ENCODE measurements at regions of chr3 and their contacts with region 1.

Region 1: DNA sequence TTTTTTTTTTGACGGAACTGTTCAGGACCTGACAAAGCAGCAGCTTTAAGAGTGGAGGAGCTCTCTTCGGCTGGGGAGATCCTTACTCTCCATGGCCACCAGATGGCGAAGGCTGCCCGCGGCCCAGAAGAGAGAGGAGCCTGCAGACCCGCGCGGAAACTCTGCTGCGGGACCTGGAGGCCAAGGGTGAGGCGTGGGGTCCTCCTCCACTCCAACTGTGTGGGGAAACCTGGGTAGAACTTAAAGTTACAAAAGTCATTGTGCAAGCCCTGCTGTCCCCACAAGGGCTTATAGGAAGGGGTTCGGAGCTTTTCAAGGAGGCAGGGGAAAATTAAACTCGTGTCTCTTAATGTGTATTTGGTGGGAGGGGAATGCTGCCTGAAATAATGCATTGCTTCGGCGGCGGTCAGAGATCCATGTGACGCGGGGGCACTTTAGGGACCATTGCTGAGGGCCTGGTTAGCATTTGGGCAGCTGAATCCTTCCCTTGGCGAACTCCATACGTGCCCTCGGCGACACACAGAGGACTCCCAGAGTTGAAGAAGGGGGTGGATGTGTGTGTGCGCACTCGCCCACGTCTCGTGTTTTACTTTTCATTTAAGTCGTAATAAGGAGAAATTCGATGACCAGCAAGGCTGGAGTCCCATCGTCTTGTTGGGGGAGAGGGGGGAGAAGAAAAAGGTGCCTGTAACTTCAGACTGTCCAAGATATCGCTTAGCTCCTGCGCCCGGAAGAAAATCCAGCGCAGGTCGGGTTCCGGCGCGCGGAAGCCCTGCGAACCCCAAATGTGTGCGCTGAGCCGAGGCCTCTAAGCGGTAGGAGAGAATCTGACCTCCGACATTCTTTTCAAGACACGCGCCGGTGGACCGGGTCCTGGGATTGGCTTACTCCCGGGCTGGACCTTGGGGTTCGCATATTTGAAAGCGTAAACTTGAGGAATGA is 9.7 kb downstream of the EOMES start:
- DNase-seq: peak; percentile 77 to 80 (median 78)
- H3K4me3 ChIP-seq: peak overlapping the region; percentile 71 to 83
- H3K4me3 Mint-ChIP-seq: peak overlapping the region; percentile 92 to 99 (median 97)
- H3K27ac ChIP-seq: peak overlapping the region; percentile 4
- H3K27ac Mint-ChIP-seq: peak overlapping the region in 6 of 7 donors; percentile 64 to 94 (median 88)
- H3K4me1 ChIP-seq: peaks cover 25% of the 10 kb centered on the region
- H3K4me1 Mint-ChIP-seq: peaks cover 13 to 42% (median 24%) of the 10 kb centered on the region in 4 donors
- H3K27me3 ChIP-seq: peaks cover 18% of the 10 kb centered on the region
- H3K27me3 Mint-ChIP-seq: peaks cover 20 to 25% of the 10 kb centered on the region in 2 donors

Region 2: DNA sequence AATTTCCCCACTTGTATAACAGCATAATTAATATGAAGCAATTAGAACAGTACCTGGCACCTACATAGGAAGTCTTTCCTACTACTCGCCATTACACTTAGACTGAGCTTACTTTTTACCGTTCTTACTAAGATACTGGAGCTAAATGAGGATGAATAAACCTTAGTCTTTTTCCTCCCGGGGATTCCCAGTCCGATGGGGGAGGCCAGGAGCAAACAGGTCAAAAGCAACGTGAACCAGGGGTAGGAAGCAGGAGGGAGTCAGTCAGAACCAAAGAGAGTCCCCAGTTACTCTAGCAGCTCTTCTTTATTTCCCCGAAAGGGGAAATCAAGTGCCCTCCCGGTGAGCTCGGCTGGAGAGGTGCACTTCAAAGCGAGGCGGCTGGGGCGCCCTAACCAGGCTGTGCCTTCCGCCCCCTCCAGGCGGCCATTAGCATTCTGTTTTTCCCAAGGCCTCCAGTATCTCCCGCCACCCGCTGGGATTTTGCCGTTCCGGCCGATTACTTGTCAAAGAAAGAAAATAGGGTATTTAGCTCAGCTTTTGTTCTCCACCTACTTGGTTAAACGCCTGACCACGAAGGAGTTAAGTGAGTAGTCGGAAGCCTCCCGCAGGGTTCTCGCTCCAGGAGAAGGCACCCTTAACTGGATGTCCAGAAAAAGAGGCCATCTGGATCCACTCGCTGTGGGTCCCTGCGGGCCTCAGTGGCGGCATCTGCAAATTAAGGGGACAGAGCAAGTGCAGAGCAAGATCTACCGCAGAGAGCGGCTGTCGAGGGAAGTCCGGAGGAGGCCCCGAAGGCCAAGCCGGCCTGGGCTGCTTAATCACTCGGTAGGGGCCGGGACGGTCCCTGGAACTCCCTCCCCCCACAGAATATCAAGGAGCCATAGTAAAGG is 16.0 kb after region 1 on chr3:
- CTCF ChIA-PET with region 1: interaction called, 86 read pairs
- POLR2A ChIA-PET with region 1: interaction called, 45 read pairs
- intact Hi-C with region 1: no loop called
- DNase-seq: no peak
- H3K4me3 ChIP-seq: peak overlapping the region in 1 of 2 donors; percentile 2
- H3K4me3 Mint-ChIP-seq: peak overlapping the region; percentile 58 to 86 (median 72)
- H3K27ac ChIP-seq: no peak overlapping the region
- H3K27ac Mint-ChIP-seq: no peak overlapping the region
- H3K4me1 ChIP-seq: peaks cover 48% of the 10 kb centered on the region
- H3K4me1 Mint-ChIP-seq: peaks cover 31 to 54% (median 42%) of the 10 kb centered on the region in 4 donors
- H3K27me3 ChIP-seq: peaks cover 63% of the 10 kb centered on the region
- H3K27me3 Mint-ChIP-seq: peaks cover 70 to 71% of the 10 kb centered on the region in 2 donors

Region 3: DNA sequence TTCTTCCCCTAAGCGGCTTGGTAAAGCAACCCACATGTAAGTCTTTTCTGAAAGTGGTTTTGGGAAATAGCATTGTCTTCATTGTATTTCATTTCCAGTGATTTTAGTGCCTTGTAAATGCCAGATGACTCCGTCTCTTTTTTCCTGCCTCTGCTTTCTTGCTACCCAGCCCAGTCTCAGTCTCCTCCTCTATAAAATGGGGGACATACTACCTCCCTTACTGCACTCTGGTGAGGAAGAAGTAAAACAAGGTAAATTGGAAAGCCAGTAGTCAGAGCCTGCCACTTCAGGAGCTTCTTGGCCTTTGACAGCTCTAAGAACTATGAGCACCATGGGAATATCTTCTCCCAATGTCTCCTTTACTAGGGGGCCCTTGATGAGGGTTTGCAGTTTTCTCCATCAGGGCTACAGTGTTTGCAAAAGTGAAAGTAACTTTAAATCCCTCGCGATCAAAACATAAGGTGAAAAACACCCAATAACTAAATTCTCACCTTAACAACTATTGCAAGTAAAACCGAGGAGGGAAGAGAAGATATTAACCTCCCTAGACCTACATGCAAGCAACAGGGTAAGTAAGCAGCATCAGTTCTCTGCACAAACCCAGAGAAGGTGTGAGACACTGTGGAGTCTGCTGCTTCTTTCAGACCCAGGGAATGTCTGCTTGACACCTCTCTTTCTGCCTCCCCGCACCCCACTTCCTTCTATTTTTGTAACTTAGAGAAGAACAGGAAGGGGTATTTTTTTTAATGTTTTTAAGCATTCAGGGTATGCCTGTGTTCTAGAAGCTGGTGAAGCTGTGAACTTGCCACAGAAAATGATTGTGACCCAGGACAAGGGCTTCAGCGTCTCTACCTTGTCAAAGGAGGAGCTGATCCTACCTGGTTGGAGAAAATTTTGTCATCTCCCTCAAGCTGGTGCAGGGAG is 168.8 kb after region 1 on chr3:
- CTCF ChIA-PET with region 1: interaction called, 4 read pairs
- POLR2A ChIA-PET with region 1: interaction called, 4 read pairs
- intact Hi-C with region 1: loop called (anchors 2 kb)
- DNase-seq: peak; percentile 55 to 71 (median 63)
- H3K4me3 ChIP-seq: peak overlapping the region; percentile 42 to 57
- H3K4me3 Mint-ChIP-seq: peak overlapping the region; percentile 79 to 96 (median 90)
- H3K27ac ChIP-seq: peak overlapping the region; percentile 60
- H3K27ac Mint-ChIP-seq: peak overlapping the region; percentile 82 to 95 (median 93)
- H3K4me1 ChIP-seq: peaks cover 60% of the 10 kb centered on the region
- H3K4me1 Mint-ChIP-seq: peaks cover 45 to 67% (median 59%) of the 10 kb centered on the region in 4 donors
- H3K27me3 ChIP-seq: no peaks in the 10 kb centered on the region
- H3K27me3 Mint-ChIP-seq: no peaks in the 10 kb centered on the region

Region 4: DNA sequence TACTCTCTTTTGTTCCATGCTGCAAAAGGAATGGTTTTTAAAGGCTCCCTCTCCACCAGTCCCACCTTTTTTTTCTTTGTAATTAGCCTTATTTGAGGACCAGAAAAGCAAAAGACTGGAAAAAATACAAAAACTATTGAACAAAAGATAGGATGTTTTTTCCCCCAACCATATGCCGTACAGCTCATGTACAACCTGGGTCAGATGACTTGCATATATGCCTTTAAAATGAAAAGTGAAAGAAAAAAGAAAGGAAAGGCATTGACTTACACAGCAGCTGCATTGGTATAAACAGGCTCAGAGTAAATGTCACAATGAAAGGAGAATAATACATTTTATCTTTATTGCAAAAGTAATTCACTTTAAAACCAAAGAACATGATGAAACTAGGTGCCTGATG is 459.6 kb after region 1 on chr3:
- CTCF ChIA-PET with region 1: interaction called, 10 read pairs
- POLR2A ChIA-PET with region 1: no interaction called
- intact Hi-C with region 1: no loop called
- DNase-seq: peak in 4 of 5 donors; percentile 6 to 38 (median 27)
- H3K4me3 ChIP-seq: peak overlapping the region in 1 of 2 donors; percentile 47
- H3K4me3 Mint-ChIP-seq: peak overlapping the region in 7 of 8 donors; percentile 28 to 86 (median 75)
- H3K27ac ChIP-seq: no peak overlapping the region
- H3K27ac Mint-ChIP-seq: peak overlapping the region in 6 of 7 donors; percentile 15 to 75 (median 69)
- H3K4me1 ChIP-seq: peaks cover 18% of the 10 kb centered on the region
- H3K4me1 Mint-ChIP-seq: peaks cover 11 to 16% (median 11%) of the 10 kb centered on the region in 4 donors
- H3K27me3 ChIP-seq: no peaks in the 10 kb centered on the region
- H3K27me3 Mint-ChIP-seq: peaks cover 0 to 2% of the 10 kb centered on the region in 2 donors

Region 5: GRCh38 chr3:28286595-28286994 is 574.2 kb after region 1 on chr3:
- CTCF ChIA-PET with region 1: interaction called, 78 read pairs
- POLR2A ChIA-PET with region 1: interaction called, 5 read pairs
- intact Hi-C with region 1: loop called (anchors 1 kb)
- DNase-seq: peak in 4 of 5 donors; percentile 28 to 38 (median 31)
- H3K4me3 ChIP-seq: no peak overlapping the region
- H3K4me3 Mint-ChIP-seq: no peak overlapping the region
- H3K27ac ChIP-seq: no peak overlapping the region
- H3K27ac Mint-ChIP-seq: no peak overlapping the region
- H3K4me1 ChIP-seq: no peaks in the 10 kb centered on the region
- H3K4me1 Mint-ChIP-seq: peaks cover 9 to 24% (median 12%) of the 10 kb centered on the region in 4 donors
- H3K27me3 ChIP-seq: no peaks in the 10 kb centered on the region
- H3K27me3 Mint-ChIP-seq: no peaks in the 10 kb centered on the region

Region 6: DNA sequence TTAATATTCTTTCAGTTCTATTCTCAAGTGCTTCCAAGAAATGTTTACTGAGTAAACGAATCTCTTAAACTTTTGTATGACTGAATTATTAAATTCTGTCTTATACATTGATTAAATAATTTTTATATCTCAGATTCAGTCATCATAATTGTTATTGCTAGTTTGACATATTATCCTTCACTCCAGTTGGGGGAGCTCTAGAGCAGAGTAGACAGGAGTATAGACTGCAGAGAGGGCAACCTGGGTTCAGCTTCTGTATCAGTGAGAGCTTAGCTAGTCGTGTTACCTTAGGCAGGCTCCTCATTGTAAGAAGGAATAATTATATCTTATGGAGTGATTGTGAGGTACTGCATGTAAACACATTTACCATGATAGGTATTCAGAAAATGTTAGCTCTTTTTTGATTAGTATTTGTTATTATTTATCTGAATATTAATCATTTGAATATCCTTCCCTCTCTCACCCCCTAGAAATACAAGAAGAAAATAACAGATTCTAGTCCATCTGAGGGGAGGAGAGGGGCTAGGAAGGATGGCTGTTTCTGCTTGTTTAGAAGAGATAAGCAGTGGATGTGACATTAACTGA is 605.1 kb after region 1 on chr3:
- CTCF ChIA-PET with region 1: interaction called, 328 read pairs
- POLR2A ChIA-PET with region 1: no interaction called
- intact Hi-C with region 1: no loop called
- DNase-seq: peak; percentile 46 to 58 (median 55)
- H3K4me3 ChIP-seq: no peak overlapping the region
- H3K4me3 Mint-ChIP-seq: no peak overlapping the region
- H3K27ac ChIP-seq: no peak overlapping the region
- H3K27ac Mint-ChIP-seq: no peak overlapping the region
- H3K4me1 ChIP-seq: no peaks in the 10 kb centered on the region
- H3K4me1 Mint-ChIP-seq: peaks cover 3 to 17% (median 13%) of the 10 kb centered on the region in 4 donors
- H3K27me3 ChIP-seq: no peaks in the 10 kb centered on the region
- H3K27me3 Mint-ChIP-seq: no peaks in the 10 kb centered on the region

Region 7: DNA sequence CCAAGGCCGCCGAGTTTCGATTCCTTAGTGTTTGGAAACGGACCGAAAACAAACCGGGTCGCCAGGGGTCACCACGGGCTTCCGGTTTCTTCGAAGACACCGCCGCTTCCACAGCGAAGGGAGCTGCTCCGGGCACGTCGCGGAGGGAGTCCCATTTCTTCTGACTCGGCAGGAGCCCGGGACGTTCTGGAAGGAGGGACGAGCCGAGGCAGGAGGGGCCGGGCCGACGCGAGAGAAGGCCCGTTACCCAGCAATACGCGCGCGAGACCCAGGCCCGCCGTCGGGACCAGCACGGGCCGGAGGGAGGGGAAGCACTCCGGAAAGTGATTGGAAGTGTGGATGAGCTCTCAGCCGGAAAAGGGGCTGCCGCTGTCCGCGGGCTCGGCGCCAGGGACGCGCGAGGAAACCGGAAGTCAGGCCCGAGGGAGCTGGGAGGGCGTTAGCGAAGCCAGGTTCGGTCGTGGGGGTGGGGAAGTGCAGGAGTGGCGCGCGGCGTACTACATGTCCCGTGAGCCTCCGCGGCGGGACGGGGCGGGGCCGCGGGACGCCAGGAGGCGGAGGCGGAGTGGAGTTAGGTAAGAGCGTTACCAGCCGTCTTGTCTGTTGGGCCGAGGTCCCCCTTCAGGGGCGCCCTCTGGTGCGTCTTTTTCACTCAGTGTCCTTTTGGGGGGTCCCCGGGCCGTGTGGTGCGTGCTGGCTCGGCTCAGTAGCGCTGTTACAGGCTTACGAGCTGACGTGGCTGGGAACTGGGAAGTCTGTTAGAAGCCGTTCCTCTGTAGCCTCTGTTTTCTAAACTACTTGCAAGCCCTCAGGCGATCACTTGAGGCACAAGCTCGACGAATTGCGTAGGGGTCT is 636.4 kb after region 1 on chr3 and contains the starts of genes AZI2 and ZCWPW2:
- CTCF ChIA-PET with region 1: interaction called, 14 read pairs
- POLR2A ChIA-PET with region 1: interaction called, 23 read pairs
- intact Hi-C with region 1: loop called (anchors 5 kb)
- DNase-seq: peak; percentile 90 to 94 (median 91)
- H3K4me3 ChIP-seq: peak within 1 kb of the TSS; percentile 85 to 94
- H3K4me3 Mint-ChIP-seq: peak within 1 kb of the TSS; percentile 93 to 99 (median 97)
- H3K27ac ChIP-seq: peak within 1 kb of the TSS; percentile 94
- H3K27ac Mint-ChIP-seq: peak within 1 kb of the TSS; percentile 97 to 100 (median 98)
- H3K4me1 ChIP-seq: peaks cover 50% of the 10 kb centered on the region
- H3K4me1 Mint-ChIP-seq: peaks cover 38 to 64% (median 51%) of the 10 kb centered on the region in 4 donors
- H3K27me3 ChIP-seq: no peaks in the 10 kb centered on the region
- H3K27me3 Mint-ChIP-seq: no peaks in the 10 kb centered on the region
- total RNA-seq, gene AZI2: 40.3 to 44.5 TPM
- total RNA-seq, gene ZCWPW2: 0.61 to 1.5 TPM

Measured in CD4-positive, alpha-beta memory T cell (primary cell).